H1 (cell line): ENCODE measurements at regions of chr2 and their contacts with region 1.

Region 1: DNA sequence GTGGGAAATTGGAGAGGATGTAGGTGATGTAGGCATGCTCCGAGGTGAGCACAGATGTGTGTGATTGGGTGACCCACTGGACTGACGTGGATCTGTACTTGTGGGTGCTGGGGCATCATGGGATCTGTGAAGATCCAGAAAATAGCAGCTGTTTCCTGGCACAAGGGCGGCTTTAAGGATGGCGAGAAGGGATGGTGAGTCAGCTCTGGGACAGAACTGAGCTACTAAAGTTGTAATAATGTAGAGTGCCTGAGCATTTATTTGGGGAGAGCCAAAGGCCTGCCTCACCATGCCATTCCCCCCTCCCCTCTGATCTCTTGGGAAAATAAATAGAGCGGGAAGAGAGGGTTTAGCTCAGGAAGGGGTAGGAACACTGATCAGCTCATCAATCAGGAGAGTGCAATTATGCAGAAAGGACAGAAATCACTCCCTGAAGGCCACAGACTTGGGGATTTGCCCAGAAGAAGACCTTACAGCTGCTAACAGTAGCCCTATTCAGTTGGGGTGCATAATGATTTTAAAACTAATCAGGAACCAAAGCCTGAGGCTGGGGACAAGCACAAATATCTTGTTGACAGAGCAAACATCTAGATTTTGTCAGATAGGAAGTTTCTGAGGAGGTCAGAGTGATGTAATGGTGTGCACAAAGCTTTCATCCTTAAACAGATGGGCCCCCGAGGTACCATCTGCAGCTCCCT is 30.3 kb downstream of the TANC1 start:
- DNase-seq: no peak
- H3K4me3 ChIP-seq: no peak overlapping the region
- H3K27ac ChIP-seq: no peak overlapping the region
- H3K4me1 ChIP-seq: peaks cover 0 to 9% (median 4%) of the 10 kb centered on the region in 4 experiments; a peak in 3 of 7 replicates
- H3K27me3 ChIP-seq: no peaks in the 10 kb centered on the region
- CTCF ChIP-seq: no peak
- EP300 ChIP-seq: no peak
- POLR2A ChIP-seq: no peak
- RAD21 ChIP-seq: no peak

Region 2: DNA sequence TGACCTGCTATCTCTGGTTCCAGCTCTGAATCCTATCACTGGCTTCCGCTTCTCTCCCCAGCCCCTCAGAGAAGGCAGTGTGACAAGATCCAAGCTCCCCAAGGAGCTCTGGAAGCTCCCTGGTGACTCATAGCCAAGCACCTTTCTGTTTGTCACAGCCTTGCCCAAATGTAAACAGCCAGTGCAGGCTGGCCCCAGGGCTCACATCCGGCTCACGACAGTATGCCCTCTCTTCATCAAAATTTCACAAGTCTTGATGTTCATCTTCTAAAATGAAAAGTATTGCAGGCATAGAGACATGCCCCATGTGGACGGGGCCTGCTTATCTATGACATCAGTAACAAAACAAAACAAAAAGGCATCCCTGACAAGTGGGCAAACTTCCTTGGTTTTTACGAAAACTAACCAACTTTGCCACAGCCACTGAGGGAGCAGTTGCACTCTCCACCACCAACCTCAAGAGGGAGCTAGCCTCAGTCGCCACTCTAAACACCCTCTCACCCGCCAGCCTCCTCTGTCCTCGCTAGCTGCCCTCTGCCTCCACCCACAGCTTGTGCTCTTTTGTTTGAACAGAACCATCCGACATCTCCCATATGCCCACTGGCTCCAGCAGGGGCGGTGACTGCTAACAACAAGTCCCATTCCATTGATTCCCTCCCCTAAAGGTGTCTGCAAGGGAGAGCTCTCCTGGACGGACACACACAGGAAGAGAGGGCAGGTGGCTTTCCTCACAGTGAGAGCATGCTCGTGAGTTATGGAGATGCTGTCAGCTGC is 274.6 kb before region 1 on chr2:
- CTCF ChIA-PET with region 1: no interaction called
- POLR2A ChIA-PET with region 1: no interaction called
- DNase-seq: peak; percentile 10 to 75
- H3K4me3 ChIP-seq: no peak overlapping the region
- H3K27ac ChIP-seq: peak overlapping the region; percentile 29; the same call in 1 of the 2 replicates
- H3K4me1 ChIP-seq: peaks cover 0 to 6% (median 2%) of the 10 kb centered on the region in 4 experiments; a peak in 1 of 7 replicates
- H3K27me3 ChIP-seq: no peaks in the 10 kb centered on the region
- CTCF ChIP-seq: peak; percentile 62 to 96 (median 88)
- EP300 ChIP-seq: no peak
- POLR2A ChIP-seq: no peak
- RAD21 ChIP-seq: peak; percentile 50 to 62; a peak in 3 of 4 replicates

Region 3: GRCh38 chr2:158963071-158963470 is 35.6 kb before region 1 on chr2:
- CTCF ChIA-PET with region 1: no interaction called
- POLR2A ChIA-PET with region 1: no interaction called
- DNase-seq: no peak
- H3K4me3 ChIP-seq: no peak overlapping the region
- H3K27ac ChIP-seq: no peak overlapping the region
- H3K4me1 ChIP-seq: peaks cover 0 to 5% (median 2%) of the 10 kb centered on the region in 4 experiments; a peak in 5 of 7 replicates
- H3K27me3 ChIP-seq: peaks cover 0 to 20% (median 8%) of the 10 kb centered on the region in 4 experiments; a peak in 4 of 7 replicates
- CTCF ChIP-seq: no peak
- EP300 ChIP-seq: no peak
- POLR2A ChIP-seq: no peak
- RAD21 ChIP-seq: no peak

Region 4: GRCh38 chr2:158984604-158985135 is 14.0 kb before region 1 on chr2:
- CTCF ChIA-PET with region 1: interaction called, 22 read pairs
- POLR2A ChIA-PET with region 1: interaction called, 4 read pairs
- DNase-seq: no peak
- H3K4me3 ChIP-seq: no peak overlapping the region
- H3K27ac ChIP-seq: no peak overlapping the region
- H3K4me1 ChIP-seq: peaks cover 0 to 2% (median 0%) of the 10 kb centered on the region in 4 experiments; a peak in 2 of 7 replicates
- H3K27me3 ChIP-seq: no peaks in the 10 kb centered on the region
- CTCF ChIP-seq: no peak
- EP300 ChIP-seq: no peak
- POLR2A ChIP-seq: no peak
- RAD21 ChIP-seq: no peak

Region 5: DNA sequence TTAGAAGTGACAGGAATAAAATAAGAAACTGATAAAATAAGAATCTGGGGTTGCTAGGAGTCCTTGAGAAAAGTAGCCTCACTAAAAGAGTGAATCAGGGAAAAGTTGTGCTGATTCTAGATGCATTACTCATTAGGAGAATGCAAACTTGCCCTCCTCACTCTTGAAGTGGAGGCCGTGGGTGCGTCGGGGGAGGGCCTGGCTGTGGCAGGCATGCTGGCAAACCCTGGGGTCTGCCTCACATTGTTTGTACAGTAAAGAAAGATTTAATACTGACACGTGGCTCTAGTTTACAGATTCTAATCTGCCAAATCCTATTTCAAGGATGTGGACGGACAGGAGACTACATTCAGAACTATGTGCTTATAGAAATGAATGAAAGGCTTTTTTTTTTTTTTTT is 11.6 kb after region 1 on chr2:
- CTCF ChIA-PET with region 1: interaction called, 12 read pairs
- POLR2A ChIA-PET with region 1: no interaction called
- DNase-seq: no peak
- H3K4me3 ChIP-seq: no peak overlapping the region
- H3K27ac ChIP-seq: no peak overlapping the region
- H3K4me1 ChIP-seq: peaks cover 0 to 3% (median 0%) of the 10 kb centered on the region in 4 experiments; a peak in 3 of 7 replicates
- H3K27me3 ChIP-seq: no peaks in the 10 kb centered on the region
- CTCF ChIP-seq: no peak
- EP300 ChIP-seq: no peak
- POLR2A ChIP-seq: no peak
- RAD21 ChIP-seq: no peak